ENCODE measurements at regions of chr9 and their contacts with region 1.

Region 1: DNA sequence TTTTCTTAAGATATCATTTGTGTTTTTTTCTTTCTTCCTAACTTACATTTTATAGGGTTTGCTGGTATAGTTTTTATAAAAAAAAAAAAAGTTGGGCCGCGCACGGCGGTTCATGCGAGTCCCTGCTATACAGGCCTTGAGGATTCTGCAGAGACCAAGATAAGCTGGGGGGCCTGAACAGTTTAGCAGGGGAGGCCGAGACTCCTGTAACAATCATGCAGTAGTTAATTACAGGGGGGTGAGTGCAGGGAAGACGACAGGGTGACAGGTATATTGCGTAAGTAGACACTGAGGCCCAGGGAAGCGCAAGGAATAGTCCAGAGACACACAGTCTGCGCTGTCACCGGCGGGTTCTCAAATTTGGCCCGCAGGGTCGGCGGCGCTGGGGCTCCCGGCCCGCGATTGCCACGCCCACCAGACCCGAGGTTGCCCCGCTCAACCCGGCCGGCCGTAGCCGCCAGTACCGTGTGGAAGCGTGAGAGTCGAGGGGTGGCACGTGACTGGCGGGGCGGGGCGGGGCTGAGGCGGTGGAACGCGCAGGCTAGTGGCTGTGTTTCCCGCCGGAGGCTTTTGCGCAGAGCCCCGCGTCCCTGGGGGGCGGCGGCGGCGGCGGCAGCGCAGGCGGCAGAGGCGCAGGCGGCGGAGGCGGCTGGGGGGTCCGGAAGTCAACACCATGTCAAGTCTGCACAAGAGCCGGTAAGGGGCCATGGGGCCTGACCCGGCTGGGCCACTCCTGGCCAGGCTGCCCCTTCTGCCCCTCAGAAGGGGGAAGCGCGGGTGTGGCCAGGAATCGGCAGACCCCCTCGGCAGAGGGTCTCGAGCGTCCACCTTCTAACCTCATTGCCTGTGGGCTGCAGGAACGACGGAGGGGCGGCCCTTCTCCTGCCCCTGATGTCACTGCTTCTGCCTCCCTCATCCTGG is at the start of gene TBC1D13:
- DNase-seq: peak; percentile 90 to 92 (median 90)
- H3K4me3 ChIP-seq: peak within 1 kb of the TSS; percentile 76 to 80
- H3K4me3 Mint-ChIP-seq: peak within 1 kb of the TSS; percentile 87 to 96 (median 90)
- H3K27ac ChIP-seq: peak within 1 kb of the TSS; percentile 72
- H3K27ac Mint-ChIP-seq: peak within 1 kb of the TSS; percentile 90 to 96 (median 96)
- H3K4me1 ChIP-seq: peaks cover 19% of the 10 kb centered on the region
- H3K4me1 Mint-ChIP-seq: peaks cover 11 to 30% (median 16%) of the 10 kb centered on the region in 4 donors
- H3K27me3 ChIP-seq: no peaks in the 10 kb centered on the region
- H3K27me3 Mint-ChIP-seq: no peaks in the 10 kb centered on the region
- total RNA-seq, gene TBC1D13: 28.0 to 31.4 TPM

Region 2: DNA sequence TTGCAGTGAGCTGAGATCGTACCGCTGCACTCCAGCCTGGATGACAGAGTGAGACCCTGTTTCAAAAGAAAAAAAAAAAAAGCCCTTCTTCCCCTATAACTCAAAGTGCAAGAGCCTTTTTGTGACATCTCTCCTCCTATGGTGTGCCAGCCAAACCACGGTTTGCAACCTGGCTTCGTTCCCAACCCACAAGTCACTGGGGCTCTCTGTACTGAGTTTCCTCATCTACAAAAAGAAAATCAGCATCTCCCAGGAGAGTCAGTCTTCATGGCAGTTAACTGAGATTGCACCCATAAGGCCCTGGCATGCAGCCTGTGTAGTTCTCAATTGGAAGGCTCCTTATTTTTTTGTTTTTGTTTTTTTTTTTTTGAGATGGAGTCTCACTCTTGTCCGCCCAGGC is 316.4 kb before region 1 on chr9:
- CTCF ChIA-PET with region 1: no interaction called
- POLR2A ChIA-PET with region 1: no interaction called
- intact Hi-C with region 1: no loop called
- DNase-seq: no peak
- H3K4me3 ChIP-seq: no peak overlapping the region
- H3K4me3 Mint-ChIP-seq: no peak overlapping the region
- H3K27ac ChIP-seq: no peak overlapping the region
- H3K27ac Mint-ChIP-seq: peak overlapping the region in 2 of 7 donors; percentile 59 to 89
- H3K4me1 ChIP-seq: no peaks in the 10 kb centered on the region
- H3K4me1 Mint-ChIP-seq: peaks cover 0 to 5% (median 2%) of the 10 kb centered on the region in 4 donors
- H3K27me3 ChIP-seq: no peaks in the 10 kb centered on the region
- H3K27me3 Mint-ChIP-seq: no peaks in the 10 kb centered on the region

Region 3: GRCh38 chr9:128656416-128657343 is 130.3 kb before region 1 on chr9 and contains the start of gene DYNC2I2:
- CTCF ChIA-PET with region 1: no interaction called
- POLR2A ChIA-PET with region 1: no interaction called
- intact Hi-C with region 1: loop called (anchors 2 kb)
- DNase-seq: peak; percentile 95 to 96 (median 96)
- H3K4me3 ChIP-seq: peak within 1 kb of the TSS; percentile 95 to 98
- H3K4me3 Mint-ChIP-seq: peak within 1 kb of the TSS; percentile 91 to 98 (median 94)
- H3K27ac ChIP-seq: peak within 1 kb of the TSS; percentile 95
- H3K27ac Mint-ChIP-seq: peak within 1 kb of the TSS; percentile 95 to 100 (median 99)
- H3K4me1 ChIP-seq: peaks cover 8% of the 10 kb centered on the region
- H3K4me1 Mint-ChIP-seq: peaks cover 2 to 15% (median 6%) of the 10 kb centered on the region in 4 donors
- H3K27me3 ChIP-seq: no peaks in the 10 kb centered on the region
- H3K27me3 Mint-ChIP-seq: no peaks in the 10 kb centered on the region
- total RNA-seq, gene DYNC2I2: 4.3 to 4.6 TPM

Region 4: DNA sequence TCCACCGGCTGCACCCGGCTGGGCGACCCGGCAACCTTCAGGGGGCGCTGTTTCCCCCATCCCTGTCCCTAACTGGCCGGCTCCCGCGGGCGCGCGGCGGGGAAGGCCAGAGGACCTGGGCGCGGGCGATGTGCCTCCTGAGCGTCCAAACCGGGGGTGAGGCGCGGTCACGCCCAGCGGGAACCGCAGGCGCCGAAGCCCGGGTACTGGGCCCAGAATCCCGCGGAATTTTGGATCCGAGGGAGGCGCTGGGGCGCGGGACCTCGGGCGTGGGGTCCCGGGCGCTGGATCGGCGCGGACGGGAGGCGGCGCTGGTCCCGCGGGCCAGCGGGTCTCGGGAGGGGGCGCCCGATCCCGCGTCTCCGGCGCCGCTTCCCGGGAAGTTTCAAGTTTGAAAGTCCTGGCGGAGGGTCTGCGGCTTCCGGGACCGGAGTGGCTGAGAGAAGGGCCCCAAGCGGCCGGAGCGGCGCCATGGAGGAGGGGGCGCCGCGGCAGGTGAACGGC is 84.4 kb before region 1 on chr9 and contains the start of gene PKN3:
- CTCF ChIA-PET with region 1: interaction called, 4 read pairs
- POLR2A ChIA-PET with region 1: no interaction called
- intact Hi-C with region 1: loop called (anchors 1 kb)
- DNase-seq: peak; percentile 79 to 87 (median 82)
- H3K4me3 ChIP-seq: peak within 1 kb of the TSS; percentile 17 to 45
- H3K4me3 Mint-ChIP-seq: peak within 1 kb of the TSS; percentile 83 to 95 (median 90)
- H3K27ac ChIP-seq: peak within 1 kb of the TSS; percentile 38
- H3K27ac Mint-ChIP-seq: peak within 1 kb of the TSS in 6 of 7 donors; percentile 76 to 94 (median 84)
- H3K4me1 ChIP-seq: peaks cover 10% of the 10 kb centered on the region
- H3K4me1 Mint-ChIP-seq: peaks cover 2 to 19% (median 11%) of the 10 kb centered on the region in 4 donors
- H3K27me3 ChIP-seq: no peaks in the 10 kb centered on the region
- H3K27me3 Mint-ChIP-seq: no peaks in the 10 kb centered on the region
- total RNA-seq, gene PKN3: 1.7 to 2.6 TPM

Region 5: DNA sequence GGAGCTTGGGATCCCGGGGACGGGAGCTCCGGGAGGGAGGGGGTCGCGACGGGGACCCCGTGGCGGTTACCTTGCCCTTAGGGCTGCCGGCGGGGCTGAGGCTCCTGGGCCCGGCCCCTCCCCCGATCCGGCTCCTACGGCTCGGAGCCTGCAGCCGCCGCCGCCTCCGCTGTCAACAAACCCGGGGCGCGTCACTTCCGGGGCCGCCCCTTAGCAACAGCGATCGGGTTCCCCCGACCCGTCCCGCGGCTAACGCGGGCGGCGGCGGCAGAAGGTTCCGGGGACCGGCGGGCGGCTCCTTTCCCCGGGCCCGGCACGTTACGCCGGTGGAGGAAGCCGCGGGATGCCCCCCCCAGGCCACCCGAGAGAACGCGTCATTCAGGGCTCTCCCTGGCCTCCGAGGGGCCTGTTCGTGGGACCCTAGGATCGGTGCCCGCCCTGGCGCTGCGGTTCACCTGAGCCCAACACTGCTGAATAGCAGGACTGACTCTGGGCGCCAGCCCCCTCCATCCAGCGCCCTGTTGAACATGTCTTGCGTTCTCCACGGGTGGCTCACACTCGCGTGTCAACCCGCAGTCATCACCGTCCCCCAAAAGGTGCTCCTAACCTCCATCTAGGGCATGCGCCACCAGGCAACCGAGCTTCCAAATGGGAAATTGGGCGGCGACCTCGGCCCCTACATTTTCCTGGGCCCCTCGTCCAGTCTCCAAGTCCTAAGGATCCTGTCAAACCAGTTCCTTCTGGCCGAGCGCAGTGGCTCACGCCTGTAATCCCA is 15.0 kb before region 1 on chr9 and contains the start of gene ZER1:
- CTCF ChIA-PET with region 1: interaction called, 5 read pairs
- POLR2A ChIA-PET with region 1: interaction called, 63 read pairs
- intact Hi-C with region 1: loop called (anchors 1 kb)
- DNase-seq: peak; percentile 93 to 95 (median 94)
- H3K4me3 ChIP-seq: peak within 1 kb of the TSS; percentile 73 to 98
- H3K4me3 Mint-ChIP-seq: peak within 1 kb of the TSS; percentile 96 to 99 (median 98)
- H3K27ac ChIP-seq: peak within 1 kb of the TSS; percentile 96
- H3K27ac Mint-ChIP-seq: peak within 1 kb of the TSS; percentile 92 to 99 (median 99)
- H3K4me1 ChIP-seq: peaks cover 32% of the 10 kb centered on the region
- H3K4me1 Mint-ChIP-seq: peaks cover 19 to 38% (median 26%) of the 10 kb centered on the region in 4 donors
- H3K27me3 ChIP-seq: no peaks in the 10 kb centered on the region
- H3K27me3 Mint-ChIP-seq: no peaks in the 10 kb centered on the region
- total RNA-seq, gene ZER1: 37.9 to 44.2 TPM

Region 6: GRCh38 chr9:128881901-128882681 is 95.2 kb after region 1 on chr9 and contains the starts of genes KYAT1 and LRRC8A:
- CTCF ChIA-PET with region 1: no interaction called
- POLR2A ChIA-PET with region 1: no interaction called
- intact Hi-C with region 1: loop called (anchors 2 kb)
- DNase-seq: peak; percentile 96 to 99 (median 97)
- H3K4me3 ChIP-seq: peak within 1 kb of the TSS; percentile 95 to 99
- H3K4me3 Mint-ChIP-seq: peak within 1 kb of the TSS; percentile 94 to 99 (median 98)
- H3K27ac ChIP-seq: peak within 1 kb of the TSS; percentile 84
- H3K27ac Mint-ChIP-seq: peak within 1 kb of the TSS; percentile 92 to 98 (median 98)
- H3K4me1 ChIP-seq: peaks cover 43% of the 10 kb centered on the region
- H3K4me1 Mint-ChIP-seq: peaks cover 34 to 72% (median 56%) of the 10 kb centered on the region in 4 donors
- H3K27me3 ChIP-seq: no peaks in the 10 kb centered on the region
- H3K27me3 Mint-ChIP-seq: no peaks in the 10 kb centered on the region
- total RNA-seq, gene KYAT1: 9.8 to 12.4 TPM
- total RNA-seq, gene LRRC8A: 24.4 to 26.4 TPM

Region 7: GRCh38 chr9:128969491-128969890 is 182.6 kb after region 1 on chr9:
- CTCF ChIA-PET with region 1: no interaction called
- POLR2A ChIA-PET with region 1: no interaction called
- intact Hi-C with region 1: no loop called
- DNase-seq: no peak
- H3K4me3 ChIP-seq: no peak overlapping the region
- H3K4me3 Mint-ChIP-seq: no peak overlapping the region
- H3K27ac ChIP-seq: no peak overlapping the region
- H3K27ac Mint-ChIP-seq: peak overlapping the region in 1 of 7 donors; percentile 25
- H3K4me1 ChIP-seq: no peaks in the 10 kb centered on the region
- H3K4me1 Mint-ChIP-seq: peaks cover 0 to 4% (median 0%) of the 10 kb centered on the region in 4 donors
- H3K27me3 ChIP-seq: no peaks in the 10 kb centered on the region
- H3K27me3 Mint-ChIP-seq: no peaks in the 10 kb centered on the region